Mammary epithelial cell (primary cell): ENCODE measurements at regions of chr14 and their contacts with region 1.

Region 1: GRCh38 chr14:57833323-57833722 is 32.6 kb downstream of the SLC35F4 start:
- DNase-seq: peak; percentile 97
- H3K4me3 ChIP-seq: no peak overlapping the region
- H3K27ac ChIP-seq: peak overlapping the region; percentile 14
- H3K4me1 ChIP-seq: peaks cover 23% of the 10 kb centered on the region
- H3K27me3 ChIP-seq: no peaks in the 10 kb centered on the region
- CTCF ChIP-seq: no peak

Region 2: GRCh38 chr14:57725399-57726077 is 107.8 kb before region 1 on chr14:
- CTCF ChIA-PET with region 1: no interaction called
- dilution Hi-C with region 1: no loop called
- in situ Hi-C with region 1: no loop called
- intact Hi-C with region 1: loop called (anchors 10 kb)
- DNase-seq: peak; percentile 82
- H3K4me3 ChIP-seq: no peak overlapping the region
- H3K27ac ChIP-seq: peak overlapping the region; percentile 39
- H3K4me1 ChIP-seq: peaks cover 15% of the 10 kb centered on the region
- H3K27me3 ChIP-seq: no peaks in the 10 kb centered on the region
- CTCF ChIP-seq: no peak

Region 3: DNA sequence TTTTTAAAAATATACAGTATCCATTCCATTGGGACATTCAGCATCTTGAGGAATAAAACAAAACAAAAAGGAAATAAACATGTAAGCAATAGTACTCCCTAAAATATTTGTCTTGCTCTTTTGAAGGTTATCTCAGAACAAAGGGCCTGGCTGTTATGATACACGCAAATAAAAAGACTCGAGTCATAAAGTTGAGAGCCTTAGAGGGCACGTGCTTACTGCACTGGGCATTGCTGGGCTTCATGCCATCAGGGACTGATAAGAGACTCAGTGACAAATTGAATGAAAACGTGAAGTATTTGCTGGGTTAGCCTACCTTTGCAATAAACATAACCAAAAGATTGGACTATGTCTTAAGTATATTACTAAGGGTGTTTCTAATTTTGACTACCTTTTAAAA is 86.3 kb before region 1 on chr14:
- CTCF ChIA-PET with region 1: no interaction called
- dilution Hi-C with region 1: no loop called
- in situ Hi-C with region 1: loop called in 1 of 2 experiments (anchors 10 kb)
- intact Hi-C with region 1: loop called (anchors 5 kb)
- DNase-seq: peak; percentile 22
- H3K4me3 ChIP-seq: no peak overlapping the region
- H3K27ac ChIP-seq: no peak overlapping the region
- H3K4me1 ChIP-seq: peaks cover 18% of the 10 kb centered on the region
- H3K27me3 ChIP-seq: no peaks in the 10 kb centered on the region
- CTCF ChIP-seq: no peak

Region 4: DNA sequence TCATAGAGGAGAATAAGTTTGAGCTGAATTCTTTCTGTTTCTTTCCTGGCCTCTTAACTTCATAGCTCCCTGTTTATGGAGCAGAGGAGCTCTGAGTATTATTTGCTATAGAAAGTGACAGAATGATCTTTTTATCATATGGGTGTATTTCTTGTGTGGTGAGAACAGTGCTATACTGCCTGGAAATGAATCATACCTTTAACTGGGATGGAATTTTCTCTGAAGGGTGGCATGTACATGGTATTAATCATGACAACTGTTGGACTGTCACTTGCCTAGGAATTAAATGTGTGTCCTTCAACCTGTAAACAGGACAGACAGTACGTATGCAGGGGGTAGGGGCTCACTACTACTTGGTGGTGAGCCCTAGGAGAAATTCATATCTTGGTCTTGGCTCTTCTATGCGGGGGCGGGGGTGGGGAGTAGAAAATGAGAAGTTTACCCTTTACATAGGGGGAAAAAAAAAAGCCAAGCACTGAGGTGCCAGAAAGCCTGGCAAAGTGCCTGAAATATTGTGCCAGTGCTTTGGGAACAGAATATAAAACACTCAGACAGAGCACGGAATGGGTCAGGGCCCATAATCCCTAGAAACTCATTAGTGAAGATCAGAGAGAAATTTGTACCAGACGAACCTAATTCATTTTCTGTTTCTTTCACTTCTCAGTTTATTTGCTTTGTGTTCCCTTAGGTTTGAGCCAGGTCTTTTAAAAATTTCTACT is 284.9 kb after region 1 on chr14:
- CTCF ChIA-PET with region 1: no interaction called
- dilution Hi-C with region 1: no loop called
- in situ Hi-C with region 1: no loop called
- intact Hi-C with region 1: no loop called
- DNase-seq: no peak
- H3K4me3 ChIP-seq: no peak overlapping the region
- H3K27ac ChIP-seq: no peak overlapping the region
- H3K4me1 ChIP-seq: no peaks in the 10 kb centered on the region
- H3K27me3 ChIP-seq: no peaks in the 10 kb centered on the region
- CTCF ChIP-seq: no peak